ENCODE measurements at regions of chr5 and their contacts with region 1.

Region 1: GRCh38 chr5:138337685-138338410 is at the start of gene FAM53C:
- DNase-seq: peak; percentile 84 to 93
- ATAC-seq: peak; percentile 88 to 95
- H3K4me3 ChIP-seq: peak within 1 kb of the TSS; percentile 82
- H3K27ac ChIP-seq: peak within 1 kb of the TSS; percentile 92 to 99
- H3K4me1 ChIP-seq: peaks cover 26% of the 10 kb centered on the region; the same call in 2 of the 3 replicates
- CTCF ChIP-seq: no peak
- EP300 ChIP-seq: no peak
- POLR2A ChIP-seq: peak; percentile 100
- RAD21 ChIP-seq: no peak; a peak in 1 of 5 replicates
- polyA plus RNA-seq, gene FAM53C: 24.5 and 24.9 TPM in 2 replicates

Region 2: DNA sequence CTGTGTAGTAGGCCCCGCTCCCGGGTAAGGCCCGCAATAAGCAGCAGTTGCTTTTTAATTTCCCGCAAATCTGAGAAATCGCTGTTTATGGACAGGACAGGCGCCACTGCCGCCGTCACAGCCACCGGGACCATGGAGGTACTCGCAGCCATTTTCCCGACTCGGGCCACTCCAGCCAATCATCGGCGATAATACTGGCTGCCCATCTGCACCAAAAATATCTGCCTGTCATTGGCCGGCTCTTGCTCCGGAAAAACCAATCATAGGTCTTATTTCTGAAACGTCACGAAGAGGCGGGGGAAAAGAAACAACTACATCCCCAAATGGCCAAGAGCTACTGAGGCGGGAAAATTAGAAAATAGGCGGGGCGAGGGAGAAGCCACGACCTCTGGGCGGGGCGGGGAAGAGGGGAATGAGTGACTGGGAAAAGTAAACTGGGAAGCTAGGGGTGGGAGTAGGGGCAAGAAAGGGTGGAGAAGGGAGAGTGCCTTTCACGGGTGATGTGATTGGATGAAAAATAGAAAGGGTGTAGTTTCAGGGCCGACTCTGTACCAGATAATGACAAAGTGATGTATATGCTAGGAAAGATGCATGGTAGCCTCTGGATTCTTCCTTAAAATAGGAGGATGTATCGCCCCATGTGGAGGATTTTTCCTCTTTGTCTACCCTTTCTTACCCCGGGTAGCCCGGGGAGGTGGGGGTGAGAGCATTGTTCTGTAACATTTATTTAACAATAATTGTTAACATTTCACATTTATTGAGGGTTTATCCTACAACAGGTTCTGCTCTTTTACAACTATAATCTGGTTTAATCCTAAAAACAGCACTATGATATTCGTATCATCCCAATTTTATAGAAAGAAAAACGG is 124.5 kb before region 1 on chr5 and contains the start of gene CDC23:
- CTCF ChIA-PET with region 1: no interaction called
- POLR2A ChIA-PET with region 1: interaction called, 10 read pairs
- DNase-seq: peak; percentile 99 to 100
- ATAC-seq: peak; percentile 98 to 99
- H3K4me3 ChIP-seq: peak within 1 kb of the TSS; percentile 85
- H3K27ac ChIP-seq: peak within 1 kb of the TSS; percentile 80 to 91
- H3K4me1 ChIP-seq: peaks cover 6% of the 10 kb centered on the region; the same call in 2 of the 3 replicates
- CTCF ChIP-seq: no peak
- EP300 ChIP-seq: no peak
- POLR2A ChIP-seq: peak; percentile 60
- RAD21 ChIP-seq: no peak
- polyA plus RNA-seq, gene CDC23: 61.7 and 70.3 TPM in 2 replicates